AG04449 (cell line): ENCODE measurements at regions of chr15 and their contacts with region 1.

Region 1: DNA sequence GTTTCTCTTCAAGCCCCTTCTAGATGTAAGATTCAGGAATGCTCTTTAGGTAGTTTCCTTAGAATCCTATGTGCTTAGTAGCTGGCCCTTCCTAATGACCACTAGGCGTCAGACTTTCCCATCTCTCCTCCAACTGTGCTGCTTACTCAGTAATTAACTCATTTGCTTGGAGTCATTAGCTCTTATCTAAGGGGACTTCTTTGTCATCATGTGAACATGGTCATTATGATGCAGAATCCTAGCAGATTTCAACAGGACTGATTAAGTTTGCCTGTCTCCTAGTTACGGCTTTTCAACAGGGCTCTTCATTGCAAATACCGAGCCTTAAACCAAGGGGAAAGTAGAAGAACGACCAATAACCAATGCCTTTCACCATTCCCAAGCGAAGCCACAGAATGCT is 46.4 kb downstream of the GJD2 start:
- DNase-seq: no peak
- H3K4me3 ChIP-seq: no peak overlapping the region
- CTCF ChIP-seq: peak; percentile 77

Region 2: DNA sequence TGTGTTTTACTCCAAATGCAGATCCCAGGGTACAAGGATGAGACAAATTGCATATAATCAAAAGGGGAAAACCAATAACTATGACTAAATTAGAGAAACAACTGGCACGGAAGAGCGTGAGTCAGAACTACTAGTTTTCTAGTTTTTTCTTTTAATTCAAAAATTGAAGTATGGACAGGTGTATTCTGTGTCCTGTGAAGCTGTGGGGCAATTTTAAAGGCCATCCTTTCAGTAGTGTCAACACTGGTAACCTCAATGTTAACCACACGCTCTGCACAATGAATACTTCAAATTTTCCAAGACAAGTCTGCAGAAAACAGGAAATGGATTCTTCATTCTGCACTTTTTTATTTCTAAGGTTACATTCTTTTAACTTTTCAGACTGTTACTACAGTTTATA is 238.3 kb before region 1 on chr15:
- CTCF ChIA-PET with region 1: no interaction called
- POLR2A ChIA-PET with region 1: no interaction called
- DNase-seq: no peak
- H3K4me3 ChIP-seq: no peak overlapping the region
- CTCF ChIP-seq: no peak

Region 3: GRCh38 chr15:34616613-34617012 is 91.8 kb before region 1 on chr15:
- CTCF ChIA-PET with region 1: interaction called, 23 read pairs
- POLR2A ChIA-PET with region 1: no interaction called
- DNase-seq: no peak
- H3K4me3 ChIP-seq: no peak overlapping the region
- CTCF ChIP-seq: peak; percentile 30

Region 4: GRCh38 chr15:34718681-34719641 is 10.5 kb after region 1 on chr15:
- CTCF ChIA-PET with region 1: interaction called, 37 read pairs
- POLR2A ChIA-PET with region 1: no interaction called
- DNase-seq: no peak
- H3K4me3 ChIP-seq: no peak overlapping the region
- CTCF ChIP-seq: no peak

Region 5: GRCh38 chr15:34810455-34811146 is 102.2 kb after region 1 on chr15:
- CTCF ChIA-PET with region 1: interaction called, 16 read pairs
- POLR2A ChIA-PET with region 1: no interaction called
- DNase-seq: peak; percentile 98
- H3K4me3 ChIP-seq: no peak overlapping the region
- CTCF ChIP-seq: no peak

Region 6: DNA sequence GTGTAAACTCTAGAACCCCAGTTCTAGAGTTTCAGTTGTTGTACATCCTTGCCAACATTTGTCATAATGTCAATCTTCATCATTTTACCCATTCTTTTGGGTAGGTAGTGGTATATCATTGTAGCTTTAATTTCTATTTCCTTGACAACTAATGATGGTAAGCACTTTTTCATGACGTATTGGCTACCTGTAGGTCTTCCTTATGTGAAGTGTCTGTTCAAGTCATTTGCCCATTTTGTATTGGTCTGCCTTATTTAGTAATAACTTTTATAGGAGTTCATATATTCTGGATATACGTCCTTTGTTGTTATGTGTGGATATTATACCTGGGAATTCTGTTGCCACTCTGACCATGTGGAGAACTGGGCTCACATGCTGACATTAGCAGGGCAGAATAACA is 160.7 kb after region 1 on chr15:
- CTCF ChIA-PET with region 1: interaction called, 10 read pairs
- POLR2A ChIA-PET with region 1: no interaction called
- DNase-seq: no peak
- H3K4me3 ChIP-seq: no peak overlapping the region
- CTCF ChIP-seq: no peak

Region 7: DNA sequence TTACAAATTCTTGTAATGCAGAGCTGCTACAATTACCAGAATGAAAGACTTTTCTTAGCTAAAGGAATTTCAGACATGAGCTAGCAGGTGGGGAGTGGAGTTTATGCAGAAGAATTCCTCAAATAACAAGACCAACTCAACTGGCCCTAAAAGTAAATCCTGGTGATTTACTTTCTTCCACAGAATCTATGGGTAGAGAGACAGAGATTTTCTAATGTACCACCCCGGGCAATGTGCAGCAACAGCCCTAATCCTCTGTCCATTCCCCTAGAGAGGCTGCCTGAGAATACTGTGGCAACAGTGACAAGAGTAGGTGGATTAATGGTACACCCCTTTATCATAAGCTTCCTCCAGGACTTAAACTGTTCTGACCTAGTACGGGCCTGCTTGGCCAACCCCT is 205.9 kb after region 1 on chr15:
- CTCF ChIA-PET with region 1: interaction called, 156 read pairs
- POLR2A ChIA-PET with region 1: no interaction called
- DNase-seq: no peak
- H3K4me3 ChIP-seq: no peak overlapping the region
- CTCF ChIP-seq: no peak